HepG2 (cell line): ENCODE measurements at regions of chr10 and their contacts with region 1.

Region 1: GRCh38 chr10:60549686-60550085 is 160.0 kb upstream of the ANK3 start:
- DNase-seq: peak; percentile 6
- ATAC-seq: peak; percentile 28; the same call in 1 of the 3 replicates
- H3K4me3 ChIP-seq: no peak overlapping the region
- H3K27ac ChIP-seq: no peak overlapping the region
- H3K4me1 ChIP-seq: no peaks in the 10 kb centered on the region
- H3K27me3 ChIP-seq: no peaks in the 10 kb centered on the region
- CTCF ChIP-seq: peak; percentile 53
- EP300 ChIP-seq: no peak
- POLR2A ChIP-seq: no peak
- RAD21 ChIP-seq: no peak

Region 2: GRCh38 chr10:60456053-60456452 is 93.6 kb before region 1 on chr10:
- CTCF ChIA-PET with region 1: no interaction called
- POLR2A ChIA-PET with region 1: no interaction called
- in situ Hi-C with region 1: no loop called
- intact Hi-C with region 1: no loop called
- DNase-seq: no peak
- ATAC-seq: no peak
- H3K4me3 ChIP-seq: no peak overlapping the region
- H3K27ac ChIP-seq: no peak overlapping the region
- H3K4me1 ChIP-seq: no peaks in the 10 kb centered on the region
- H3K27me3 ChIP-seq: no peaks in the 10 kb centered on the region; a peak in 2 of 5 replicates
- CTCF ChIP-seq: no peak
- EP300 ChIP-seq: no peak
- POLR2A ChIP-seq: no peak
- RAD21 ChIP-seq: no peak

Region 3: DNA sequence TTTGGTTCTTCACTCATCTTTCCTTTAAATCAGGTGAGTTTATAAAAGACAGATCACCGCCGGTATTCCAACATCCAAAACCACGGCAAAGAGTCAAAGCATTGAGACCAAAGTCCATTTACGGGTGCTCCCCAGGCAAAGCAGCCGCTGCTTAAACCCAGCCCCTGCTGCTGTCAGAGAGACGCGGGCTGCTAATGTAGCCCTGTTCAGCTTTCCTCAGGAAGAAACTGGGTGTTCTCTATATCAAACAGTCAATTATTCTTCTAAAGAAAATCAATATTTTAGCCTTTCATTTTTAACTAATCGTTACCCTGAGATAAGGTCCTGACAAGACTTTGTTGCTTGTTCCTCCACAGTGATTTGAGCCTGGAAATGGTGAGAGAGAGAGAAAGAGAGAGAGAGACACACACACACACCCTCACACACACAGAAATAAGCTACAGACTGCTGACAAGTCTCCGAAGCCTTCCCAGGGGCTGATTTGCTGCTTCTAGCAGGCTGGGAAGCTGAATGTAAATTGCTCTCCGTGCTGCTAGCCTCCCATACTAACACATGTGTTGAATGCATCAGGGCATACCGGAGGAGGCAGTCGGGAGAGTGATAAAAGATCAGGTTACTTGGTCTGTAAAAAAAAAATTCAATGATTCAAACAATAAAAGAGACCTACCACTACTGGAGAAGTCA is 23.0 kb after region 1 on chr10:
- CTCF ChIA-PET with region 1: no interaction called
- POLR2A ChIA-PET with region 1: no interaction called
- in situ Hi-C with region 1: no loop called
- intact Hi-C with region 1: no loop called
- DNase-seq: peak; percentile 12
- ATAC-seq: peak; percentile 81
- H3K4me3 ChIP-seq: no peak overlapping the region
- H3K27ac ChIP-seq: no peak overlapping the region
- H3K4me1 ChIP-seq: no peaks in the 10 kb centered on the region
- H3K27me3 ChIP-seq: 0 out of 5 replicates have a peak, but pooled peaks cover 0 to 3% of the 10 kb centered on the region in 2 experiments
- CTCF ChIP-seq: no peak
- EP300 ChIP-seq: no peak
- POLR2A ChIP-seq: no peak
- RAD21 ChIP-seq: no peak

Region 4: GRCh38 chr10:60652628-60653027 is 102.9 kb after region 1 on chr10:
- CTCF ChIA-PET with region 1: interaction called, 11 read pairs
- POLR2A ChIA-PET with region 1: no interaction called
- in situ Hi-C with region 1: loop called (anchors 10 kb)
- intact Hi-C with region 1: loop called (anchors 1 kb)
- DNase-seq: no peak
- ATAC-seq: no peak
- H3K4me3 ChIP-seq: no peak overlapping the region
- H3K27ac ChIP-seq: no peak overlapping the region
- H3K4me1 ChIP-seq: no peaks in the 10 kb centered on the region
- H3K27me3 ChIP-seq: no peaks in the 10 kb centered on the region
- CTCF ChIP-seq: no peak
- EP300 ChIP-seq: no peak
- POLR2A ChIP-seq: no peak
- RAD21 ChIP-seq: no peak

Region 5: DNA sequence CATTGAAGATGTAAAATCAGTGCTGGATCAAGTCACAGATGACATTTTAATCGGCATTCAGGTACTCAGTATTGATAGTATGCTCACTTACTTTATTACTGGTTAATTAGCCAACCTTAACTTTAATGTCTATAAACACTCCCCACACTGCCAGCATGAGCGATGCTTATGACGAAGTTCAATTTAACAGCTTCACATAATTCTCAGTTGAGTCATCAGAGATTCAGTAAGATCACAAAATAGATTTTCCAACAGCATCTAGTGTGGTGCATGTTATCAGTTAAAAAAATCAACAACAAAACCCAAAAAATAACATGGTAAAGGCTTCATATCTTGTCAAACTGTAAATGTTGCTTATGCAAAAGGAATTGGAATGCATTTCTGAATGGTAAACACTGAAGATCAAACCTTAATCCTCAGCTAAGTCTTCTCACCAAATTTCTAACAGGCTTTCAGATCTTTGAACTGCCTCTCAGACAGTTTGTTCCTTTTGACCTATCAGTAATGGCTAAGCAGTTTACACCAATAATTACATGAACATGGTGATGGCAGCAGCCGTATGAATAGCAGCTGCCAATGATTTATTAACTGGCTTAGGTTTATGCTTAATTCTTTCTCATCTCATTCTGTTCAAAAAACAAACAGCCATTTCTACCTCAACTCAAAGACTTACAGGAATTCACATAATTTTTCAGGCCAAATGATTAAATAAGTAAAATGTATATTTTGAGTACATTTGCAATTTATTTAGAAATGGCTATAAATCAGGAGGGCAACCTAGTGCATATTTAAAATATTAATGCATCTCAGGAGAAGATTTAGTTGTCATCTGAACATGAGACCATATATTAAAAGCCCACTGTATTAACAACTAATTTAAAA is 1211.5 kb after region 1 on chr10:
- CTCF ChIA-PET with region 1: no interaction called
- POLR2A ChIA-PET with region 1: no interaction called
- in situ Hi-C with region 1: no loop called
- intact Hi-C with region 1: no loop called
- DNase-seq: no peak
- ATAC-seq: no peak
- H3K4me3 ChIP-seq: no peak overlapping the region
- H3K27ac ChIP-seq: no peak overlapping the region
- H3K4me1 ChIP-seq: no peaks in the 10 kb centered on the region
- H3K27me3 ChIP-seq: no peaks in the 10 kb centered on the region
- CTCF ChIP-seq: no peak
- EP300 ChIP-seq: no peak
- POLR2A ChIP-seq: no peak
- RAD21 ChIP-seq: no peak